Dendritic cell treated with granulocyte-macrophage colony-stimulating factor and Interleukin-4, amounts not matched to agents 40 ng/mL and 50 ng/mL, for 4 days (primary cell): ENCODE measurements at regions of chr4 and their contacts with region 1.

Region 1: GRCh38 chr4:8403173-8403753 is 37.3 kb downstream of the ACOX3 start:
- H3K4me3 Mint-ChIP-seq: no peak overlapping the region
- H3K27ac Mint-ChIP-seq: no peak overlapping the region
- H3K4me1 Mint-ChIP-seq: peaks cover 21% of the 10 kb centered on the region
- H3K27me3 Mint-ChIP-seq: no peaks in the 10 kb centered on the region

Region 2: DNA sequence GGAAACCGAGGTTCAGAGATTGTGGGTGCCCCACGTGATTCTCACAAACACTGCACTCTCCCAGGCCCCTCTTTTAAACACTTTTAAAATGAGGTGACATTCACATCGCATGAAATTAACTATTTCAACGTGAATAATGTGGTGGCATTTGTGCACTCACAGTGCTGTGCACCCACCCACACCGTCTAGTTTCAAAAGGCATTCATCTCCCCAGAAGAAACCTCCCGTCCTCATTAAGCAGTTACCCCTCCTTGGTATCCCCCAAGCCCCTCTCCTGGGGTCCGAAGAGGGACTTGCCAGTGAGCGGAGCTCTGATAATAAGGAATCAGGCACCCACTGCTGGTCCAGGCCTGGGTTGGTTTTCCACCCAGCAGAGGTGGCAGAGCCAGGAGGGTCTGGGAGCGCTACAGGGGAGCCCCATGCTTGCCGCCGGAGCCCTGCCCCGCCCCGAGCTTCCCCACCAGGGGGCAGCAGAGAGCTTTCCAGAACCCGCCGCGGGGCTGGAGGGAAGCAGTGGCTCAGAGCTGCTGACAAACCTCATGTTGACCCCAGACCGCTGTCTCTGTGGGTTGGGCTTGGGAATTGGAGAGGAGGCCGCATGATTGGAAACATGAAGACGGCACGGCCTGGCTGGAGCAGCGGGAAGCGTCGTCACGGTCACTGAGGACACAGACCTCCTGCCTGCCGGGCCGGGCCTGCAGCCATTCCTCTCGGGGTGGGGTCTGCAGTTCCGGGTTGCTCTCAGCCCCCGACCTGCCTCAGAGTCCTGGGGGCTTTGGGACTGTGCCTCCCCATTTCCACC is 161.2 kb before region 1 on chr4:
- intact Hi-C with region 1: loop called (anchors 1 kb)
- H3K4me3 Mint-ChIP-seq: no peak overlapping the region
- H3K27ac Mint-ChIP-seq: no peak overlapping the region
- H3K4me1 Mint-ChIP-seq: peaks cover 55% of the 10 kb centered on the region
- H3K27me3 Mint-ChIP-seq: peaks cover 2% of the 10 kb centered on the region

Region 3: GRCh38 chr4:8267077-8267476 is 136.2 kb before region 1 on chr4:
- intact Hi-C with region 1: loop called (anchors 1 kb)
- H3K4me3 Mint-ChIP-seq: no peak overlapping the region
- H3K27ac Mint-ChIP-seq: no peak overlapping the region
- H3K4me1 Mint-ChIP-seq: peaks cover 17% of the 10 kb centered on the region
- H3K27me3 Mint-ChIP-seq: peaks cover 31% of the 10 kb centered on the region

Region 4: DNA sequence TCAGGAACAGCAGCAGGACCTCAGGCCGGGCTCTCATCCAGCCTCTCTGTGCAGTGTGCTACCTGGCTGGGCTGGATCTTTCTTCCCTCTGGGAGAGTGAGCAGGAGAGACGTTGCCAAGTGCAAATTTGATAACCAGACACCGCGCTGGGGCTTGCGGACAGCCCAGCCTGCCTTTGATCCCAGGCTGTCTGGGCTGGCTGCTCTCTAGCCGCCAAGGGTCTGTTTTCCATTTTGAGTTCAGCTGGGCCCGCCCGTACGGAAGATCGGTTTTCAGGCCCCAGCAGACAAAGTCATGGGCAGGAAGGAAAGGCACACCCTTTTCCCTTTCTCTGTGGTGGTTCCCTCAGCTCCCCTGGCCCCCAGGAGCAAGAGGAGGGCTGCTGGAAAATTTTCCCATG is 279.5 kb after region 1 on chr4:
- intact Hi-C with region 1: no loop called
- H3K4me3 Mint-ChIP-seq: no peak overlapping the region
- H3K27ac Mint-ChIP-seq: no peak overlapping the region
- H3K4me1 Mint-ChIP-seq: no peaks in the 10 kb centered on the region
- H3K27me3 Mint-ChIP-seq: peaks cover 8% of the 10 kb centered on the region